GM12878 (cell line): ENCODE measurements at regions of chr9 and their contacts with region 1.

Region 1: DNA sequence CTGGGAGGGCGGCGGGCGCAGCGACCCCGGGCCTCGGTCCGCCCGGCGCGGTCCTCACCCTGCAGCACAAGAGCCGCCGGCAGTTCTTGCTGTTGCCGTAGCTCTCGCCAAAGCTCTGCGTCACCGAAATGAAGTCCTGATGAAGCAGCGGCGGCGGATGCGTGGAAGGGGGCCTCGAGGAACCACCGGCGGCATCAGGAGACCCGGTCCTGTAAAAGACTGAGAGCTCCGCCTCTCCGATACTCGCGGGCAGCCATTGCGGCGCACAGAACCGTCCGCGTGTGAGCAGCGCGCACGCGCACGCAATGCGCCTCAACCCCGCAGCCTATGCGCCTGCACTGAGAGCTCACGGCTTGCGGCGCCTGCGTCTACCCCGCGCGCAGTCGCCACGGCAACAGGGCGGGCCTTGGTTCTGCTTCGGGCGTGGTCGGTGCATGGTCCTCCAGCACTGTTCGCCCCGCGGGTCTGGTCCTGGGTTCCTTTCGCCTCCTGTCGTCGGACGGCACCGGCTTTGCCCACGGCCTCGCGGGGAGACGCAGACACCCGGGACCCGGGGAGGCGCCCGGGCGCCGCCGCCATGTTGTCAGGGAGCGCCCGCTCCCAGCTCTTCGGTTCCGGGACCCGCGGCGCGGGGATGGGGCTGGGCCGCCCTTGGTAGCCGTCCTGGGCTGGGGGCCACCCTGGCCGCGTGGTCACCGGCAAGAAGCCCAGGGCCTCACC is 9.3 kb upstream of the GRIN1 start:
- DNase-seq: peak; percentile 75
- ATAC-seq: peak; percentile 95
- H3K4me3 ChIP-seq: peak overlapping the region; percentile 72
- H3K27ac ChIP-seq: peak overlapping the region; percentile 82
- H3K4me1 ChIP-seq: peaks cover 8% of the 10 kb centered on the region
- H3K27me3 ChIP-seq: no peaks in the 10 kb centered on the region
- CTCF ChIP-seq: no peak
- EP300 ChIP-seq: no peak
- POLR2A ChIP-seq: peak; percentile 83
- RAD21 ChIP-seq: no peak

Region 2: DNA sequence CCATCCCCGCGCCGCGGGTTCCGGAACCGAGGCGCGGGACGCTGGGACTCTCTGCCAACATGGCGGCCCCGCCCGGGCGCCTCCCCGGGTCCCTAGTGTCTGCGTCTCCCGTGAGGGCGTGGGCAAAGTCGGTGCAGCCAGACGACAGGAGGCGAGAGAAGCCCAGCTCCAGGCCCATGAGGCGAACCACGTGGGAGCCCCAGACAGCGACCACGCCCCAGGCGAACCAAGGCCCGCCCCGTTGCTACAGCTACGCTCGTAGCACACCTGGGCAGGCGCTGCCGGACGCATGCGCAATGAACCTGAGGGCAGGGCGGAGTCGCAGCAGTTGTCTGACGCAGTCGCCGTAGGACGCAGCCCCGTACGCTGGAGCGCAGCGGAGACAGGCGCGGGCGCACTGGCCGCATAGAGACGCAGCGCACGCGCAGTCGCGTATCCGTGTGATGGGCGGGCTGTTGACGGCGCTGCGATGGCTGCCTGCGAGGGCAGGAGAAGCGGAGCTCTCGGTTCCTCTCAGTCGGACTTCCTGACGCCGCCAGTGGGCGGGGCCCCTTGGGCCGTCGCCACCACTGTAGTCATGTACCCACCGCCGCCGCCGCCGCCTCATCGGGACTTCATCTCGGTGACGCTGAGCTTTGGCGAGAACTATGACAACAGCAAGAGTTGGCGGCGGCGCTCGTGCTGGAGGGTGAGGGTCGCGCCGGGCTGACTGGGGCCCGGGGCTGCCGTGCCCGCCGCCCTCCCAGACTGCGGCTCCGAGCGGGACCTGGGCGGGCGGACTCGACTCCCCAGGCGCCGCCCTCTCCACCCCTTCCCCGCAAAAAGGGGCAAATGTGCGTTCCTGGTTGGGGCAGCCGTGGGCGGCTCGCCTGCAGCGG is 42.8 kb before region 1 on chr9 and contains the start of gene MAN1B1:
- CTCF ChIA-PET with region 1: interaction called, 6 read pairs
- POLR2A ChIA-PET with region 1: interaction called, 14 read pairs
- RAD21 ChIA-PET with region 1: interaction called, 3 read pairs
- SMC1A ChIA-PET with region 1: interaction called, 4 read pairs
- in situ Hi-C with region 1: no loop called
- intact Hi-C with region 1: no loop called
- DNase-seq: peak; percentile 99
- ATAC-seq: peak; percentile 83
- H3K4me3 ChIP-seq: peak within 1 kb of the TSS; percentile 83
- H3K27ac ChIP-seq: peak within 1 kb of the TSS; percentile 90
- H3K4me1 ChIP-seq: peaks cover 29% of the 10 kb centered on the region
- H3K27me3 ChIP-seq: no peaks in the 10 kb centered on the region
- CTCF ChIP-seq: peak in 1 of 3 experiments; percentile 23; a peak in 1 of 6 replicates
- EP300 ChIP-seq: no peak
- POLR2A ChIP-seq: no peak
- RAD21 ChIP-seq: no peak
- polyA plus RNA-seq, gene MAN1B1: 0.71 to 2.0 TPM

Region 3: GRCh38 chr9:137114610-137115391 is 14.8 kb before region 1 on chr9 and contains the start of gene DPP7:
- CTCF ChIA-PET with region 1: interaction called, 9 read pairs
- POLR2A ChIA-PET with region 1: interaction called, 16 read pairs
- RAD21 ChIA-PET with region 1: interaction called, 3 read pairs
- SMC1A ChIA-PET with region 1: interaction called, 3 read pairs
- in situ Hi-C with region 1: no loop called
- intact Hi-C with region 1: no loop called
- DNase-seq: no peak
- ATAC-seq: peak; percentile 97
- H3K4me3 ChIP-seq: peak within 1 kb of the TSS; percentile 70
- H3K27ac ChIP-seq: peak within 1 kb of the TSS; percentile 58; the same call in 1 of the 2 replicates
- H3K4me1 ChIP-seq: peaks cover 6% of the 10 kb centered on the region; the same call in 1 of the 2 replicates
- H3K27me3 ChIP-seq: no peaks in the 10 kb centered on the region
- CTCF ChIP-seq: no peak
- EP300 ChIP-seq: no peak
- POLR2A ChIP-seq: peak; percentile 87
- RAD21 ChIP-seq: no peak
- polyA plus RNA-seq, gene DPP7: 0.68 to 10.0 TPM

Region 4: DNA sequence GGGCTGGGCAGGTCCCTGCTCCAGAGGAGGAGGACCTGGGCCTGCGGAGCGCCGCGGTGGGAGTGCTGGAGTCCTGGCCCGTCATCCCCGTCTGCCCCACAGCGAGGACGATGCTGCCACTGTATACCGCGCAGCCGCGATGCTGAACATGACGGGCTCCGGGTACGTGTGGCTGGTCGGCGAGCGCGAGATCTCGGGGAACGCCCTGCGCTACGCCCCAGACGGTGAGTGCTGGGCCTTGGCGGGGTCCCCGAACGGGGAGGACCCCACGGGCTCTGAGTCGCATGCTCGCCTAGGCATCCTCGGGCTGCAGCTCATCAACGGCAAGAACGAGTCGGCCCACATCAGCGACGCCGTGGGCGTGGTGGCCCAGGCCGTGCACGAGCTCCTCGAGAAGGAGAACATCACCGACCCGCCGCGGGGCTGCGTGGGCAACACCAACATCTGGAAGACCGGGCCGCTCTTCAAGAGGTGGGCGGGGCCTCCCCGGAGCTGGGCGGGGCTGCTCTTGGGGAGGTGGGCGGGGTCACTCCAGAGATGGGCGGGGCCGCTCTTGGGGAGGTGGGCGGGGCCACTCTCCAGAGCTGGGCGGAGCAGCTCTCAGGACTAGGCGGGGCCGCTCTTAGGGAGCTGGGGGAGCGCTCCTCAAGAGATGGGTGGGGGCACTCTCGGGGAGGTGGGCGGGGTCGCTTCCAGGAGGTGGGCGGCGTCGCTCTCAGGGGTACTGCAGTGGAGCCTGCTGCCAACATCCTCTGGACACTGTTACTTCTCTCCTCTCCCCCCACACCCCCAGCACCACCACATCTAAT is 27.2 kb after region 1 on chr9:
- CTCF ChIA-PET with region 1: no interaction called
- POLR2A ChIA-PET with region 1: interaction called, 166 read pairs
- RAD21 ChIA-PET with region 1: interaction called, 54 read pairs
- SMC1A ChIA-PET with region 1: interaction called, 28 read pairs
- in situ Hi-C with region 1: no loop called
- intact Hi-C with region 1: no loop called
- DNase-seq: no peak
- ATAC-seq: peak; percentile 73
- H3K4me3 ChIP-seq: peak overlapping the region; percentile 39; the same call in 1 of the 2 replicates
- H3K27ac ChIP-seq: no peak overlapping the region
- H3K4me1 ChIP-seq: peaks cover 31% of the 10 kb centered on the region
- H3K27me3 ChIP-seq: no peaks in the 10 kb centered on the region
- CTCF ChIP-seq: no peak
- EP300 ChIP-seq: no peak
- POLR2A ChIP-seq: no peak
- RAD21 ChIP-seq: no peak

Region 5: DNA sequence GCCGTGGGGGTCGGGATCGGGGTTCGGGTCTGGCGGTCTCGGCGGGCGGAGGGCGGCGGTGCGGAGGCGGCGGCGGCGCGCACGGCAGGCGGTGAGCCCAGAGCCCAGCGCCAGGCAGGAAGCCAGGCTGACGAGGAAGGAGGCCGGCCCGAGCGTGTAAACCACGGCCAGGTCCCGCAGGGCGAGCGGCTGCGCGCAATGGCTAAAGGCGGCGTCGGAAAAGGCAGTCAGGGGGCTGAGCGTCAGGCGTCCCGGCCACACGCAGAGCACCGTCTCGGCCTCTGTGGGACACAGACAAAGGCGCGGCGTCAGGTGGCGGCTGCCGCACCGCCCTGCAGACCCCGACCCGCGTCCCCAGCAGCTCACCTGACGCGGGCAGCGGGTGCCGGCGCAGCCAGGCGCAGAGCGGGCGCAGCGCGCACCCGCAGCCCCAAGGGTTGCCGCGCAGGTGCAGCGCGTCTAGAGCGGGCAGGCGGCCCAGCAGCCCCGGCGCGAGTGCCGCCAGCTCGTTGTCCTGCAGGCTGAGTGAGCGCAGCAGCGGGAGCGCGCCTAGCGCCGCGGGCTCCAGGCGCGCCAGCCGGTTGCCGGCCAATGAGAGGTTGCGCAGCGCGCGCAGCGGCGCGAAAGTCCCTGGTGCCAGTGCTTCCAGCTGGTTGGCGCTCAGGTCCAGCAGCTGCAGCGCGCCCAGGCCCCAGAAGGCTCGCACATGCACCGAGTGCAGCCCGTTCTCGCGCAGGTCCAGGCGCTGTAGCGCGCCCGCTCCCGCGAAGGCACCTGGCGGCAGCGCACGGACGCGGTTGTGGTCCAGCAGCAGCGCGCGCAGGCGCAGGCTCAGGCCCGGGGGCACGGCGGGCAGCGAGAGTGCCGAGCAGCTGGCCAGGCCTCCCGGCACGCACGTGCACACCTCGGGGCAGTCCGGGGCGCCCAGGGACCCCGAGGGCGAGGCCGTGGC is 39.6 kb after region 1 on chr9:
- CTCF ChIA-PET with region 1: interaction called, 4 read pairs
- POLR2A ChIA-PET with region 1: interaction called, 12 read pairs
- RAD21 ChIA-PET with region 1: interaction called, 4 read pairs
- SMC1A ChIA-PET with region 1: no interaction called
- in situ Hi-C with region 1: no loop called
- intact Hi-C with region 1: no loop called
- DNase-seq: no peak
- ATAC-seq: peak; percentile 79
- H3K4me3 ChIP-seq: peak overlapping the region; percentile 53; the same call in 1 of the 2 replicates
- H3K27ac ChIP-seq: no peak overlapping the region
- H3K4me1 ChIP-seq: peaks cover 8% of the 10 kb centered on the region; the same call in 1 of the 2 replicates
- H3K27me3 ChIP-seq: peaks cover 0 to 8% of the 10 kb centered on the region in 2 experiments; a peak in 3 of 4 replicates
- CTCF ChIP-seq: no peak
- EP300 ChIP-seq: no peak
- POLR2A ChIP-seq: no peak
- RAD21 ChIP-seq: no peak

Region 6: GRCh38 chr9:137188490-137189296 is 59.1 kb after region 1 on chr9 and contains the starts of genes ANAPC2 and SSNA1:
- CTCF ChIA-PET with region 1: interaction called, 7 read pairs
- POLR2A ChIA-PET with region 1: interaction called, 11 read pairs
- RAD21 ChIA-PET with region 1: interaction called, 10 read pairs
- SMC1A ChIA-PET with region 1: interaction called, 7 read pairs
- in situ Hi-C with region 1: no loop called
- intact Hi-C with region 1: loop called (anchors 5 kb)
- DNase-seq: peak; percentile 82
- ATAC-seq: peak; percentile 92
- H3K4me3 ChIP-seq: peak within 1 kb of the TSS; percentile 99
- H3K27ac ChIP-seq: peak within 1 kb of the TSS; percentile 77
- H3K4me1 ChIP-seq: peaks cover 22% of the 10 kb centered on the region
- H3K27me3 ChIP-seq: no peaks in the 10 kb centered on the region
- CTCF ChIP-seq: peak; percentile 41 to 58 (median 52)
- EP300 ChIP-seq: peak; percentile 14 to 49; a peak in 1 of 4 replicates
- POLR2A ChIP-seq: peak; percentile 95
- RAD21 ChIP-seq: peak; percentile 45
- polyA plus RNA-seq, gene ANAPC2: 0.03 to 0.04 TPM
- polyA plus RNA-seq, gene SSNA1: 0.63 to 13.4 TPM

Region 7: GRCh38 chr9:137445275-137445807 is 315.7 kb after region 1 on chr9:
- CTCF ChIA-PET with region 1: no interaction called
- POLR2A ChIA-PET with region 1: no interaction called
- RAD21 ChIA-PET with region 1: no interaction called
- SMC1A ChIA-PET with region 1: no interaction called
- in situ Hi-C with region 1: no loop called
- intact Hi-C with region 1: no loop called
- DNase-seq: peak; percentile 40
- ATAC-seq: peak; percentile 91
- H3K4me3 ChIP-seq: no peak overlapping the region
- H3K27ac ChIP-seq: no peak overlapping the region
- H3K4me1 ChIP-seq: peaks cover 8% of the 10 kb centered on the region
- H3K27me3 ChIP-seq: no peaks in the 10 kb centered on the region
- CTCF ChIP-seq: peak; percentile 74 to 86 (median 83)
- EP300 ChIP-seq: no peak
- POLR2A ChIP-seq: no peak
- RAD21 ChIP-seq: peak; percentile 76

Region 8: GRCh38 chr9:137556069-137556838 is 426.6 kb after region 1 on chr9:
- CTCF ChIA-PET with region 1: no interaction called
- POLR2A ChIA-PET with region 1: no interaction called
- RAD21 ChIA-PET with region 1: no interaction called
- SMC1A ChIA-PET with region 1: no interaction called
- in situ Hi-C with region 1: no loop called
- intact Hi-C with region 1: no loop called
- DNase-seq: no peak
- ATAC-seq: no peak
- H3K4me3 ChIP-seq: no peak overlapping the region
- H3K27ac ChIP-seq: no peak overlapping the region
- H3K4me1 ChIP-seq: peaks cover 6% of the 10 kb centered on the region
- H3K27me3 ChIP-seq: no peaks in the 10 kb centered on the region
- CTCF ChIP-seq: no peak
- EP300 ChIP-seq: no peak
- POLR2A ChIP-seq: no peak
- RAD21 ChIP-seq: no peak